A549 (cell line): ENCODE measurements at regions of chr5 and their contacts with region 1.

Region 1: DNA sequence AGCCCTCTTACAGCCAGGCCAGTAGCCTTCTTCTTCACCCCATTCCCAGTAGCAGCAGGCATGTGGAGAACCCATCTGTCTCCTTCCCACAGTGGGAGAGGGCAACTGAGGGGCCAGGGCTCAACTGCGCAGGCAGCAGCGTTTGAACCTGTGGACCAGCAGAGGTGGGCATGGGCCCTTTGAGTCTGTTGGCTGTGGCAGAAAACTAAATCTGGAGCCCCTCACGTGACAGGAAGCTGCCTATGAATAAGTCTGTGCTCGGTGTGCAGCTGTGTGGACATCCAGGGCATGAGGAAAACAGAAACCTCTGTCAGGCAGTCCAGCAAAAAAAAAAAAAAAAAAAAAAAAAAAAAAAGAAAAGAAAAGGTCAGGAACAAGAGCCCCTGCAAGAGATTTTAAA is 189.2 kb upstream of the NR3C1 start:
- DNase-seq: peak in 1 of 2 experiments; percentile 45
- ATAC-seq: no peak
- H3K4me3 ChIP-seq: no peak overlapping the region
- H3K27ac ChIP-seq: peak overlapping the region; percentile 94 to 98
- H3K4me1 ChIP-seq: peaks cover 52% of the 10 kb centered on the region
- CTCF ChIP-seq: no peak
- EP300 ChIP-seq: no peak
- POLR2A ChIP-seq: no peak
- RAD21 ChIP-seq: no peak

Region 2: DNA sequence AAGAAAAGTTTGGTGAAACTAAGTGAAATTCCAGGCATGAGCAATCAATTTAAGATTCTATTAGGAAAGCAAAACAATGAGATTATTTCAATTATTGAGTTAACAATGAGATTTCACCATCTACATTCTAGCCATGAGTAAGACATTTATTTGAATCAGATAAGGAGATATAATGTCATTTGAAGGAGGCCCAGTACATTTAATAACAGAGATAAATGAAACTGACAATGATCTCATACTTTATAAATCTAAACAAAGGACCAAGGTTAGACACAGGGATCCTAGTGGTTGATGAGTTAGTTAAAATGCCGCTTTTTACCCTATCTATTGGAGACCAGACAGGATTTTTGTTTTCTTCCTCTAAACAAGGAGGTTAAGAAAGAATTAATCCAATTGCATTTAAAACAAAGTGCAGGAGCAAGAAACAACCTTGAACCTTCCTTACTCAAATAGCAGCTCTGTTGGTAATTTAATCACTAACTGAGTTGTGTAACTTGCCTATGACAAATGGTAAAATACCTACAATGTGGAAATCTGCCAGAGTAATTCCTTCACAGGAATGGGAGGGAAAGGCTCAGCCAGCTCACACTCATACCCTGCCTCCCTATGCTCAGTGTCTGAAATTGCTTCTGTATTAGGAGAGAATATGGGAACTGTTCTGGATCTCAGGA is 85.6 kb before region 1 on chr5:
- CTCF ChIA-PET with region 1: interaction called, 6 read pairs
- POLR2A ChIA-PET with region 1: interaction called, 20 read pairs
- DNase-seq: peak; percentile 65 to 96
- ATAC-seq: peak; percentile 94 to 97
- H3K4me3 ChIP-seq: peak overlapping the region; percentile 16; the same call in 1 of the 3 replicates
- H3K27ac ChIP-seq: peak overlapping the region; percentile 96
- H3K4me1 ChIP-seq: peaks cover 50% of the 10 kb centered on the region
- CTCF ChIP-seq: peak; percentile 35; the same call in 2 of the 3 replicates
- EP300 ChIP-seq: peak; percentile 84 to 94; a peak in 3 of 5 replicates
- POLR2A ChIP-seq: no peak
- RAD21 ChIP-seq: peak; percentile 65 to 76; a peak in 4 of 5 replicates

Region 3: DNA sequence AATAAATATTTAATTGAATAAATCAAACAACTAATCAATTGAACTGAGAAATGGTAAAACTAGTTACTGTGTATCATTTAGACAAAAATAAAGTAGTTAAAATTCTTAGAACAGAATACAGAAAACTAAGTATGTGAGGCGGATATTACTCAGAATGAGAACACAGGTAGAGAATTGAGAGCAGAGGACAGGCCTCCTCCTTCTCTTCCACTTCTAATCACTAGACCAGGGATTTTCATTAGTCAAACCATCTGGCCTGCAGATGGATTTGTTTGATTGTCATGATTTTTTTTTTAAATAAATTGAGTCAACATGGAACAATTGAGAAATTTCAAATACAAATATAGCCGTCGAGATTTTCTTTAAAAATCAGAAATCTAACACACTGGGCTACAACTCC is 20.7 kb after region 1 on chr5:
- CTCF ChIA-PET with region 1: no interaction called
- POLR2A ChIA-PET with region 1: no interaction called
- DNase-seq: no peak
- ATAC-seq: no peak
- H3K4me3 ChIP-seq: no peak overlapping the region
- H3K27ac ChIP-seq: no peak overlapping the region
- H3K4me1 ChIP-seq: no peaks in the 10 kb centered on the region
- CTCF ChIP-seq: no peak
- EP300 ChIP-seq: no peak
- POLR2A ChIP-seq: no peak
- RAD21 ChIP-seq: no peak

Region 4: GRCh38 chr5:144308906-144309670 is 716.4 kb after region 1 on chr5:
- CTCF ChIA-PET with region 1: no interaction called
- POLR2A ChIA-PET with region 1: no interaction called
- DNase-seq: no peak
- ATAC-seq: no peak
- H3K4me3 ChIP-seq: no peak overlapping the region
- H3K27ac ChIP-seq: no peak overlapping the region
- H3K4me1 ChIP-seq: no peaks in the 10 kb centered on the region
- CTCF ChIP-seq: no peak
- EP300 ChIP-seq: no peak
- POLR2A ChIP-seq: no peak
- RAD21 ChIP-seq: no peak